AG04449 (cell line): ENCODE measurements at regions of chr1 and their contacts with region 1.

Region 1: DNA sequence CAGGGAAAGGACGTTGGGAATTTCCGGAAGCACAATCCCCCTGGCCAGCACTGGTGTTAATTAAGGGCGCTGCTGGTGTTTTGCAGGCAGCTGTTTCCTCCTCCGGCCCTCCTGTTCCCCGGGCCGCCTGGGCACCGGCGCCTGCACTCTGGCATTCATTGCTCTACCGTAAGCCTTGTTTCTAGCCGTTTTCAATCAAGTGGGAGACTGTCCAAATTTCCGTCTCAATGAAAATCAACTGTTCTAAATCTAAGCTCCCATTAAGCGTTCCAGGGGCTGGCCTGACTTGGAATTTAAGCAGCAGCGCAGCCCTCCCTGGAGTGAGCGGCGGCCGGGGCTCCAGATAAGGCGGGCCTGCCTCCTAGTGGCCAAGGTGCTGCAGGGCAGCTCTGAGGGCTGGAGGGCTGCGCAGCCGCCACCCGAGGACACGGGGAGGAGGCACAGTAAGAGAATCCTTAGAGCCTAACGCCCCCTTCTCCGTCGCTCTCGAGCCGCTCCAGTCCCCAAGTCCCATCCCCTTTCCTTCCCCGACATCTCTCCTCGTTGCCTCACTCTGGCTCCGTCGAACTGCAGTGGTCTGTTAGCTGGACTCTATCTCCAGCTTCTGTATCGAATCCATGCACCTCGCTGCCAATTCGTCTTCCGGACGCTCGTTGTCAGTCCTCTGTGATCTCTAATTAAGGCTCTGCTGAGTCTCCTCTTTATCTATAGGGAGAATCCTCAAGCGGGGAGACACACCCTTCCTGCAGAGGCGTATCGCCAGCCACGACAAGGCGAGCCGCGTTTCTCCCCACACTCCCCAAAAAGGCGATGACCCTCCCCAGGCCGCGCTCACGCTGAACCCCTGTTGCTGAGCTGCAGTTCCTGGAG is 57.8 kb upstream of the LRRC8D start:
- DNase-seq: peak; percentile 19
- H3K4me3 ChIP-seq: peak overlapping the region; percentile 66
- CTCF ChIP-seq: peak; percentile 99

Region 2: GRCh38 chr1:89519779-89520358 is 243.1 kb before region 1 on chr1:
- CTCF ChIA-PET with region 1: interaction called, 21 read pairs
- POLR2A ChIA-PET with region 1: no interaction called
- DNase-seq: no peak
- H3K4me3 ChIP-seq: no peak overlapping the region
- CTCF ChIP-seq: peak; percentile 43

Region 3: GRCh38 chr1:89615676-89616598 is 147.1 kb before region 1 on chr1:
- CTCF ChIA-PET with region 1: interaction called, 11 read pairs
- POLR2A ChIA-PET with region 1: no interaction called
- DNase-seq: no peak
- H3K4me3 ChIP-seq: no peak overlapping the region
- CTCF ChIP-seq: no peak

Region 4: DNA sequence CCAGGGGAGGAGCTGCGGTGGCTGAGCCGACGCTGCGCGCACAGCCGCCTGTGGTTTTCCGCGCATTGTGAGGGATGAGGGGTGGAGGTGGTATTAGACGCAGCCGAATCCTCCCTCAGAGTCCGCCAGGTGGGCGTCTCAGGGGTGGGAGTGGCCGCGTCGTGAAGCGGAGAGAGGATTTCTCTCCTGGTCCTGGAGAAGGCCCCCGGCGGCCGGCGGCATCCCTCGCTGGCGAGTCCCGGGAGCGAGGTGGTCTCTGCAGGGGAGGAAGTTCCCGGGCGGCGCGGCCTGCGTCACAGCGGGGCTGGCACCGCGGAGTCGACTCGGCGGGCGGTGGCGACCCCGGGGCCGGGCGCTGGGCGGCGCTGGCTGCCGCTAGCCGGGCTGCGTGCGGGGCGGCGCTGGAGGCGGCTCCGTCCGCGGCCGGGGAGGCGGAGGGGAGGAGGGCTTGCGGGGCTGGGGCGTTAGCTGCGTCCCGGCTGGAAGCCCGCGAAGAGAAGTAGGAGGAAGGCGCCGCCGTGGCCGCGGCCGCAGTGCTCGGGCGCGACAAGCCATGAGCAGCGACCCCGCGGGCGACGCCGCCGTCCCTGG is 130.3 kb before region 1 on chr1 and contains the start of gene LRRC8C:
- CTCF ChIA-PET with region 1: interaction called, 259 read pairs
- POLR2A ChIA-PET with region 1: interaction called, 8 read pairs
- DNase-seq: no peak
- H3K4me3 ChIP-seq: peak within 1 kb of the TSS; percentile 84
- CTCF ChIP-seq: peak; percentile 30

Region 5: DNA sequence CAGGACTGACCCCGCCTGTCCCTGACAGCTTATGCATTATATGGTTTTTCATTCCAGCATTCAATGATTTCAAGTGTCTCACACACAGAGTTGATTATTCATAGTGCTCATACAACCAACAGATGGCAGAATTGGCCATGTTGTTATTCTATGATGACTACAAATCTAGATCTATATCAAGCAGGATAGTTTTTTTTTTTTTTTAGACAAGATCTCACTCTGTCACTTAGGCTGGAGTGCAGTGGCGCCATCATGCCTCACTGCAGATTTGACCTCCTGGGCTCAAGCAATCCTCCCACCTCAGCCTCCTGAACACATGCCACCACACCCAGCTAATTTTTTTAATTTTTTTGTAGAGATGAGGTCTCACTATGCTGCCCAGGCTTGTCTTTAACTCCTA is 17.7 kb after region 1 on chr1:
- CTCF ChIA-PET with region 1: interaction called, 89 read pairs
- POLR2A ChIA-PET with region 1: no interaction called
- DNase-seq: peak; percentile 10
- H3K4me3 ChIP-seq: no peak overlapping the region
- CTCF ChIP-seq: peak; percentile 42

Region 6: DNA sequence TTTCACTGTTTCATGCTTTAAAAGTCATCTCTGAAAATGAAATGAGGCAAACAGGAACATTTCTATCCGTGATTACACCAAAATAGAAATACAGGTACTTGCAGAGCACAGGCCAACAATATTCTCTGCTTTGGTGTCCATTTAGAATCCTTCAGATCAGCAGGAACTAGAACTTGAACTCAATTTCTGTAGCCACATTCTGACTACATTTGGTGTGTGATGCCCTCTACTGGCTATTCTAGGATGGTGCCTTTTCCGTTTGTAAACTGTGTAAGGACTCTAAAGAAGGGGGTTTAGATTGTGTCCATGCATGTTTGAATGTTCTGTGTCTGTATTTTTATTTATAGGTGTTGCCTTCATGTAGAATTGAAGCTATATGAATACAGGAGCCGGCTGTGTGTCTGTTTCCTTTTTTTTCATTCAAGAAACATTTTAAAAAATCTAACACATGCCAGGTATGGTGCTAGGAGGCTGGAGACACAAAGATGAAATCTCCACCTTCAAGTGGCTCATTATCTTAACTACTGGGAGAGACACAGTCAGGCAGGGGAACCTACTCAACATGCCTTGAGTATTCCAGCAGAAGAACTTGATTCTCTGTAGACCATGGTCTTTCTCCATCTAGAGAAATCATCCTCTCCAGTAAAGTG is 224.3 kb after region 1 on chr1:
- CTCF ChIA-PET with region 1: interaction called, 31 read pairs
- POLR2A ChIA-PET with region 1: no interaction called
- DNase-seq: no peak
- H3K4me3 ChIP-seq: no peak overlapping the region
- CTCF ChIP-seq: peak; percentile 69